Activated CD4-positive, alpha-beta memory T cell treated with anti-CD3 and anti-CD28 coated beads for 36 hours (primary cell): ENCODE measurements at regions of chr4 and their contacts with region 1.

Region 1: GRCh38 chr4:164768516-164768915 is 14.6 kb downstream of the SMIM31 start:
- DNase-seq: no peak
- H3K4me3 Mint-ChIP-seq: no peak overlapping the region
- H3K27ac Mint-ChIP-seq: no peak overlapping the region
- H3K4me1 Mint-ChIP-seq: no peaks in the 10 kb centered on the region
- H3K27me3 Mint-ChIP-seq: peaks cover 16% of the 10 kb centered on the region

Region 2: GRCh38 chr4:165096776-165097175 is 328.3 kb after region 1 on chr4:
- CTCF ChIA-PET with region 1: interaction called, 10 read pairs
- POLR2A ChIA-PET with region 1: no interaction called
- intact Hi-C with region 1: no loop called
- DNase-seq: no peak
- H3K4me3 Mint-ChIP-seq: no peak overlapping the region
- H3K27ac Mint-ChIP-seq: no peak overlapping the region
- H3K4me1 Mint-ChIP-seq: no peaks in the 10 kb centered on the region
- H3K27me3 Mint-ChIP-seq: no peaks in the 10 kb centered on the region